ENCODE measurements at regions of chr19 and their contacts with region 1.

Region 1: GRCh38 chr19:33771384-33772101 is 25.1 kb upstream of the KCTD15 start:
- DNase-seq: peak; percentile 84
- CTCF ChIP-seq: peak; percentile 88

Region 2: GRCh38 chr19:33235269-33235995 is 536.1 kb before region 1 on chr19:
- CTCF ChIA-PET with region 1: interaction called, 11 read pairs
- POLR2A ChIA-PET with region 1: no interaction called
- DNase-seq: peak; percentile 91
- CTCF ChIP-seq: peak; percentile 82

Region 3: DNA sequence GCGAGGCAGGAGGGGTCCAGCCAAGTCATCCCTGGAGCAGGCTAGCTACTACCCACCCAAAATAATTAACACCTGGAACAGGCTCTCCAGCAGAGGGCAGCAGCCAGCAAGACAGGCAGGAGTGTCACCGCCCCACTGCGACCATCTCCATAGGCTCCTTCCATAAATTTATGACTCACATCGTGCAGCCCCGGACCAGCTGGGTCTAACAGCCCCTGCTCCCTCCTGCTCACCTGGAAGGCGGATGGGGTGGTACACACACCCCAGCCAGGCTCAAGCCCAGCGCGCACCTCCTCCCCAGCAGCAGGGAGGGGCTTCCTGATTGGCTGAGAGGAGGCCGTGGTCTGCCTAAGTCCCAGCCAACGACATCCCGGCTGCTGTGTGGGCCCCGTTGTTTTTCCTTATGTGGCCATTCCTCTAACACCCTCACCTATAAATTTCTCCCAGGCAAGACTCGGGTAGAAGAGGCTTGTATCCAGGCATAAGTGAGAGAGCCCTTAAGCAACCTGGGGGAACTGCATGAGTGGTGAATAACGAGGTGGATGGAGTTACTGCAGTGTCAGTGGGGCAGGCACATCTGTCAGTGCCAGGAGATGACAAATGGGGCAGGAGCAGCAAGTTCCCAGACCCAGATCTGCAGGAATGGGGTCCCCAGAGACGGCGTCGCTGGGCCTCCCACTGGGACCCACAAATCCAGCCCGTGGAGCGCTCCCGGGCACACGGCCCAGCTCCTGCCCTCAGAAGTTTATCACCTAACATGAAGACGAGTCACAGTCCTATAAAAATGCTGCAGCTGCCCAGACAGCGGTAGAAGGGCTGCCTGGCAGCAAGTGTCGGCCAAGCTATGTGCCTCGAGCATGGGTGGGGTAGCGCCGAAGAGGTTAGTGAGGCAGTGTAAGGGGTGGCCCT is 355.0 kb before region 1 on chr19:
- CTCF ChIA-PET with region 1: interaction called, 72 read pairs
- POLR2A ChIA-PET with region 1: no interaction called
- DNase-seq: peak; percentile 85
- CTCF ChIP-seq: peak; percentile 65

Region 4: GRCh38 chr19:33430674-33431277 is 340.8 kb before region 1 on chr19:
- CTCF ChIA-PET with region 1: interaction called, 65 read pairs
- POLR2A ChIA-PET with region 1: no interaction called
- DNase-seq: peak; percentile 75
- CTCF ChIP-seq: peak; percentile 93

Region 5: DNA sequence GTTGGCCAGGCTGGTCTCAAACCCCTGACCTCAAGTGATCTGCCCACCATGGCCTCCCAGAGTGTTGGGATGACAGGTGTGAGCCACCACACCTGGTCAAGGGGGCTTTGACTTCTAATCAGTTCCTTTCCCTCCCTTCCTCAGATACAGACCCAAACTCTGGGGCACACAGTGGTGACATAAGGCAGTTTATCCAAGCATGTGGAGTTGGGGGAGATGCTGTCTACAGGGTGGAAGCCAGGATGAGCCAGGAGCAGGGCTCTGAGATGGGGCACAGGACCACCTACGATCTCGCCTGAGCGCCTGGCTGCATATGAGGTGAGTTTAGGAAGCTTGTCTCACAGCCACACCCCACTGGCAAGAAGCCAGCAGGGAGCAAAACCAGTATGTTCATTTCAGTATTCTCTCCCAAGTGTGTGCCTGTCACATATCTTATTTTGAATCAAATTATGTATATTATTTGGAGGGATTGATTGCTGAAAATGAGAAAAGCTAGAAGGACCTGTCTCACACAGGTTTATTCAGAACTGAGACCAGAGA is 92.8 kb after region 1 on chr19:
- CTCF ChIA-PET with region 1: no interaction called
- POLR2A ChIA-PET with region 1: no interaction called
- DNase-seq: no peak
- CTCF ChIP-seq: no peak

Region 6: GRCh38 chr19:34096020-34096915 is 324.7 kb after region 1 on chr19:
- CTCF ChIA-PET with region 1: interaction called, 30 read pairs
- POLR2A ChIA-PET with region 1: no interaction called
- DNase-seq: peak; percentile 33
- CTCF ChIP-seq: peak; percentile 65